ENCODE measurements at regions of chr6 and their contacts with region 1.

Region 1: DNA sequence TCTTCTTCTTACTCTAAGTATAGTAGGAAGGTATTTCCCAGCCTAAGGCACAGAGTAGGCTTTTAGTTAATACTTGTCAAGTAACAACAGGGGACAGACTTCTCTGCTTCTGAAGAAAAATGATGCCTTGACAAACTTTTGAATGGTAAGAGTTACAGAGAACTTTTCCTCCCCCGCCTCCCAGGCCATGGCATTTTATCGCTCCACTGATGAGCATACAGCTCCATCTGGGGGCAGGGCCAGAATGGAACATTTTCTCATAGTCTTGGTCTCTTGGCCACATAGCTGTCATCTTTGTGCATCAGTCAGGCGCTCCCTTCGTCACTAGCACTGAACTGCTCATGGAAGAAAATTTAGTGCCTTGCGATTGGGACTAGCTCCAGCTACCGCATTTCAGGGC is 1066.8 kb upstream of the CITED2 start:
- DNase-seq: peak; percentile 26 to 46
- ATAC-seq: peak; percentile 70

Region 2: GRCh38 chr6:139369568-139370282 is 1071.5 kb before region 1 on chr6:
- intact Hi-C with region 1: loop called in 1 of 2 experiments (anchors 5 kb)
- DNase-seq: no peak
- ATAC-seq: peak; percentile 9

Region 3: GRCh38 chr6:140401761-140402160 is 39.5 kb before region 1 on chr6:
- intact Hi-C with region 1: no loop called
- DNase-seq: no peak
- ATAC-seq: no peak

Measured in left colon (tissue), 2 donors.